HEK293T (cell line): ENCODE measurements at regions of chrX and their contacts with region 1.

Region 1: DNA sequence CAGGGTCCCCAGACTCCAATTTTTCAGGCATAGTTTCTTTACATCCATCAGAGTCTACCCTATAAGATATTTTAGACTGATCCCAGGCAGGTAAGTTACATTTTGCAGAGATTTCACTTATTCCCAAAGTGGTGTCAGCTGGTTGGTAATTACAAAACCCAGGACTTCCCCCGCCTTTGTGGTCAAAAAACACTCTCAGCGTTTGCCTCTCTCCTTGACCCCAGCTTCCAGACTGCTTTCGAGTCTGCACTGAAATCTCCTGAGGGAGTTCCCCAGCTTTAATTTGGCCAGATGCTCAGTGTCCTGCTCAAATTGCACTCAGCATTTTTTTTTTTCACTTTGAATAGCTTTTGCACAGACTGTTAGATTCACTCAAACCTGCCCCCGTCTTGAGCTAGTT is 11.2 kb upstream of the AMOT start:
- DNase-seq: no peak

Region 2: DNA sequence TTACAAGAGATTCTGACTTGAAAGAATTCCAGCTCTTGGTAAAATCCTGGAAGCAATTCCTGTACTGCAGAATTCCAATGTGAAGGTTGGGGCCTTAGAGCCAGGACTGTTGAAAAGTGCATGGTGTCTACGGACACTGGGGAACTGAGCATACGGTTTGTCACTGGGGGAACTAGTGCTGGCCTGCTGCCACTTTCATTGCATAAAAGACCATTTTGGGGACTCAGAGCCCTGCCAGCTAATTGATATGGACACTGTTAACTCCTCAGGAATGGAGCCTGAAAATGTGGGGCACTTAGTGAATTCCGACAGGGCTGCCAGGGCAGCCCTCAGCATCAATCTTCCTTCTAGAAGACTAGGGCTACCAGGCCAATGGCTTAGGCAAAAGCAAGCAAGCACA is 67.1 kb before region 1 on chrX:
- CTCF ChIA-PET with region 1: no interaction called
- POLR2A ChIA-PET with region 1: no interaction called
- DNase-seq: no peak

Region 3: GRCh38 chrX:112841114-112841819 is 10.5 kb before region 1 on chrX:
- CTCF ChIA-PET with region 1: interaction called, 4 read pairs
- POLR2A ChIA-PET with region 1: interaction called, 52 read pairs
- DNase-seq: peak; percentile 96